HCT116 (cell line): ENCODE measurements at regions of chr4 and their contacts with region 1.

Region 1: DNA sequence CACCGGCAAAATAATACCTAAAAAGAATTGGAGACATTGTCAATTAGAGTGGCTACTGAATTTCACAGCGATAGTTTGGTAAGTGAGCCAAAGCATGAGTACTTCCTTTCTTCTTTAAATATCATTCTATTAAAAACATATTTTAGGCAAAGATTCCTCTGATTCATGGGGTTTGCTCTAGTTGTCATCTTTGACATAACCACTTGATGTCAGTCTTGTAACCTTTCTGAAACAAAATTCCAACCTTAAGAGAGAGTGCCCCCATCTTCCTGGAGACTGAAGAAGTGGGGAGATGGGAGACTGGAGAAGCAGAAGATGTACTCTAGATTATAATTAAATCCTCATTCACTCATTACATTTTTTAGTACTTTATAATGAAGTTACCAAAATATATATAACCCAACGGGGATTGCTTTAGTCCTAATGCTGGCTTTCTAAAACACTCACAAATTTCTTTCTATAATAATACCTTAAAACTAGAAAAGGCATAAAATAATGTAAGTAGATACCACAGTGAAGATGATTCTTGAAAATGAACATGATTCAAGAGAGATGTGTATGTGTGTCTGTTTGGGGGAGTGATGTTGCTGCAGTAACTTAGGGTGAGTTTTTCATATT is 96.4 kb downstream of the EMCN start:
- DNase-seq: peak; percentile 51
- ATAC-seq: peak; percentile 85
- H3K4me3 ChIP-seq: no peak overlapping the region
- H3K27ac ChIP-seq: no peak overlapping the region
- H3K4me1 ChIP-seq: peaks cover 4 to 5% of the 10 kb centered on the region in 2 experiments; a peak in 2 of 4 replicates
- H3K27me3 ChIP-seq: no peaks in the 10 kb centered on the region
- CTCF ChIP-seq: peak; percentile 51 to 80 (median 68)
- POLR2A ChIP-seq: no peak
- RAD21 ChIP-seq: peak; percentile 88

Region 2: DNA sequence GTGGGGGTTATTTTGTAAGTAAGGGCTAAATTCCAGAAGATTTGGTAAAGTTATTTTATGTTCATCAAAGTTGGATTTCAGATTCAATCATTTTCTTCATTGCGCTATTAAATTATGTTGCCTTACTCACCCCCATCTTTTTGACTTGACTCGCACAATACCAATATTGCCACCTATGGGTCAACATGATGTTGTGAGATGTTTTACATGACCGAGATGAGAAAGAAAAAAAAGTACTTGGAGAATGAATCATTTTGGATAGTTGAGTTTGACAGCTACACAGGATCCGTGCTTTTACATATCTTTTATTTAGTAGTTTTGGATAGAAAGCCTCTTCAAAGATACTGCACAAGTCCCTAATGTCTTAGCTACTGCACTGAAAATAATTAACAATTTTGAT is 320.6 kb after region 1 on chr4:
- CTCF ChIA-PET with region 1: interaction called, 3 read pairs
- POLR2A ChIA-PET with region 1: no interaction called
- RAD21 ChIA-PET with region 1: no interaction called
- intact Hi-C with region 1: loop called (anchors 2 kb)
- DNase-seq: peak; percentile 63
- ATAC-seq: peak; percentile 62
- H3K4me3 ChIP-seq: no peak overlapping the region
- H3K27ac ChIP-seq: no peak overlapping the region
- H3K4me1 ChIP-seq: peaks cover 12 to 19% of the 10 kb centered on the region in 2 experiments
- H3K27me3 ChIP-seq: no peaks in the 10 kb centered on the region
- CTCF ChIP-seq: peak; percentile 34 to 64 (median 59); a peak in 5 of 6 replicates
- POLR2A ChIP-seq: no peak
- RAD21 ChIP-seq: peak; percentile 71

Region 3: GRCh38 chr4:100907465-100908454 is 486.3 kb after region 1 on chr4:
- CTCF ChIA-PET with region 1: no interaction called
- POLR2A ChIA-PET with region 1: no interaction called
- RAD21 ChIA-PET with region 1: interaction called in 1 of 2 experiments, 3 read pairs
- intact Hi-C with region 1: loop called (anchors 10 kb)
- DNase-seq: no peak
- ATAC-seq: peak; percentile 63
- H3K4me3 ChIP-seq: no peak overlapping the region
- H3K27ac ChIP-seq: no peak overlapping the region
- H3K4me1 ChIP-seq: peaks cover 0 to 7% of the 10 kb centered on the region in 2 experiments; a peak in 2 of 4 replicates
- H3K27me3 ChIP-seq: no peaks in the 10 kb centered on the region
- CTCF ChIP-seq: peak; percentile 29 to 52 (median 47); a peak in 5 of 6 replicates
- POLR2A ChIP-seq: no peak
- RAD21 ChIP-seq: peak; percentile 69

Region 4: DNA sequence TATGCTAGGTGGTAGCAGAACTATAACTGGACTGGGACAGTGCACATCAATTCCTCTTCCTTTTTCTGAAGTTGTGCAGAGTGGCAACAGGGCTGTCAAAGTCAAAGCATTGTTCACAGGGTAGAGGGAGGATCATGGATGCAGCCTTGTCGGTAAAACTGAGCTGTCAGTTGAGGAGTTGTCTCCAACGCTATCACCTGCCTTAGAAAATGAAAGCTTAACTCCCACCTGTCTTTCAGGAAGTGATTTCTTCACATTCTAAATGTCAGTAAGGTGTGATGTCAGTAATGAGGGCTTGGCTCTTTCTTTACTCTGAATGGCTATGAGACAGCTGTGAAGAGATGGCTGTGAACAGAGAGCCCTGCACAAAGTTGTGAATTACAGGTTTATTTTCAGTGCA is 1302.6 kb after region 1 on chr4:
- CTCF ChIA-PET with region 1: no interaction called
- POLR2A ChIA-PET with region 1: no interaction called
- RAD21 ChIA-PET with region 1: interaction called in 1 of 2 experiments, 3 read pairs
- intact Hi-C with region 1: loop called (anchors 10 kb)
- DNase-seq: no peak
- ATAC-seq: no peak
- H3K4me3 ChIP-seq: no peak overlapping the region
- H3K27ac ChIP-seq: no peak overlapping the region
- H3K4me1 ChIP-seq: no peaks in the 10 kb centered on the region
- H3K27me3 ChIP-seq: no peaks in the 10 kb centered on the region
- CTCF ChIP-seq: no peak
- POLR2A ChIP-seq: no peak
- RAD21 ChIP-seq: no peak

Region 5: DNA sequence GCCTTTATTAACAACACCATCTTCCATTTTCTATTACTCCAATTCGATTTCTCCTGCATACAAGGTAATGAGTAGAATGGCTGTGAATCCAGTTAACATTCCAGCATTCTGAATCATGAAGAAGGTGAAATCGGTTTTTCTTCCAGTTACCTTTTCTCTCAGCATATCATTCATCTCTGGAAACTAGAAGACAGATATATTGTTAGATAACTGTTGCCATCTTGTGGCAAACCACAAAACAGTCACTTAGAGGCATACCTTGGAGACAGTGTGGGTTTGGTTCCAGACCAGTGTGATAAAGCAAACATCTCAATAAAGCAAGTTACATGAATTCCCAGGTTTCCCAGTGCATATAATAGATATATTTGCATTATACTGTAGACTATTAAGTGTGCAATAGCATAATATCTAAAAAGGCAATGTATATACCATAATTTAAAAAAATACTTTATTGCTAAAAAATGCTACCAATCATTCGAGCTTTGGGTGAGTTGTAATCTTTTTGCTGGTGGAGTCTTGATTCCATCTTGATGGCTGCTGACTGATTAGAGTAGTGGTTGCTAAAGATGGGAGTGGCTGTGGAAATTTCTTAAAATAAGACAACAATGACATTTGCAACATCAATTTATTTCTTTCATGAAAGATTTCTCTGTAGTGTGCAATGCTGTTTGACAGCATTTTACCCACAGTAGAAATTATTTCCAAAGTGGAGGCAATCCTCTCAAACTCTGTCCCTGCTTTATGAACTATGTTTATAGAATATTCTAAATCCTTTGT is 1841.7 kb after region 1 on chr4:
- CTCF ChIA-PET with region 1: no interaction called
- POLR2A ChIA-PET with region 1: no interaction called
- RAD21 ChIA-PET with region 1: no interaction called
- intact Hi-C with region 1: loop called (anchors 2 kb)
- DNase-seq: peak; percentile 51
- ATAC-seq: peak; percentile 96
- H3K4me3 ChIP-seq: no peak overlapping the region
- H3K27ac ChIP-seq: no peak overlapping the region
- H3K4me1 ChIP-seq: peaks cover 4 to 5% of the 10 kb centered on the region in 2 experiments
- H3K27me3 ChIP-seq: no peaks in the 10 kb centered on the region
- CTCF ChIP-seq: peak; percentile 51 to 75 (median 52); a peak in 5 of 6 replicates
- POLR2A ChIP-seq: no peak
- RAD21 ChIP-seq: peak; percentile 90